K562 (cell line): ENCODE measurements at regions of chr7 and their contacts with region 1.

Region 1: DNA sequence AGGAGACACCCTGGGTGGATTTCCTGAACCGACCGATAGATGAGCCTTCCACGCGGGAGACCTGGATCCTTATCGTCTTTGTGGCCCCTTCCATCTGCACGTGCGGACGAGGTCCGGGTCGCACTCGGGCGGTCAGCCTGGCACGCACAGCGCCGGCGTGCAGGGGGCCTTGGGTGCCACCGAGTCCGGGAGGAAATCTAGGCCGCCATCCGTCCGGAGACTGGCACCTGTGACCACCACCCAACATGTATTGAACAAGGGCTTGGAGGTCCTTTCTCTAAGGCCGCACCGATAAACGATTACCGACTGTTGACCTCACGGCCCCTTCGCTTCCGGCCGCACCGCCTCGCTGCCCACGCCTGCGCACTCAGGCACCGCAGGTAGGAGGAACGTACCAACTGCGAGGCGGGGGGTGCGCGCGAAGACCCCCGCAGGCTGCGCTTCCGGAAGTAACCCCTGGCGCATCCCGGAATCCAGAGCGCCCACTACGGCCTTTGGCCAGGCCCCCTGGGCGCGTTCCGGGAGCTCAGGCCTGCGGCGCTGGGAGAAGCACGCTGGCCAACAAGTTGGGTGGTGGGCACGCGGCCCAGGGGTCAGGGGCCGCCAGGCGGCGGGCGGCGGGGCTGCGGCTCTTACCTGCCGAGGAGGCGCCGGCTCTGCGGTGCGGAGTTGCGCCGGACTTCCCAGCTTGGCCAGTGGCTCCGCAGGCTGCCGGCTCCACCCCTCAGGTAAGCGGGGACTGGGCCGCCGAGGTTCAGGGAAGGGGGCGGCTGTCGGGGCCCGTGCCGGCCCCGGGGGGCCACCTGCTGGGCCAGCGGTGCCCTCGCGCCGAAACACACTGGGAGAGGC is at the starts of genes ACTR3C and LRRC61:
- DNase-seq: peak; percentile 89 to 97 (median 94)
- ATAC-seq: peak; percentile 83
- H3K4me3 ChIP-seq: peak within 1 kb of the TSS; percentile 68
- H3K27ac ChIP-seq: peak within 1 kb of the TSS; percentile 99
- H3K4me1 ChIP-seq: peaks cover 48 to 54% of the 10 kb centered on the region in 2 experiments
- H3K27me3 ChIP-seq: no peaks in the 10 kb centered on the region
- CTCF ChIP-seq: peak; percentile 63 to 78 (median 63); a peak in 4 of 6 replicates
- EP300 ChIP-seq: peak; percentile 30; the same call in 1 of the 2 replicates
- POLR2A ChIP-seq: peak; percentile 91
- RAD21 ChIP-seq: peak; percentile 87 to 90
- polyA plus RNA-seq, gene ACTR3C: 9.0 to 13.3 TPM
- polyA plus RNA-seq, gene LRRC61: 1.3 to 1.7 TPM

Region 2: DNA sequence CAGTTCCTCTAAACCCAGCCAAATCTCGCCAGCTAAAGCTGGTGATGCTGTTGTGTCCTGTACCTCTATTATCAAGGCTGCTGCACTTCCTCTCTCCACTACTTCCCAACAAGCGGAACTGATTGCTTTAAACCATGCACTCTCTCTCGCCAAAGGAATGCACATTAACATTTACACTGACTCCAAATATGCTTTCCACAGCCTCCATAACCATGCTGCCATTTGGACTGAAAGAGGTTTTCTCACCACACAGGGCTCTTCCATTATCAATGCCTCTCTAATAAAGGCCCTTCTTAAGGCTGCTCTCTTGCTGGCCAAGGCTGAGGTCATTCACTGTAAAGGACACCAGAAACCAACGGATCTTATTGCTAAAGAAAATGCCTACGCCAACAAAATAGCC is 11.3 kb before region 1 on chr7:
- CTCF ChIA-PET with region 1: no interaction called
- POLR2A ChIA-PET with region 1: interaction called, 35 read pairs
- in situ Hi-C with region 1: no loop called
- intact Hi-C with region 1: loop called (anchors 1 kb)
- DNase-seq: peak in 1 of 4 experiments; percentile 7
- ATAC-seq: no peak
- H3K4me3 ChIP-seq: no peak overlapping the region
- H3K27ac ChIP-seq: peak overlapping the region; percentile 88; the same call in 1 of the 3 replicates
- H3K4me1 ChIP-seq: peaks cover 28 to 58% of the 10 kb centered on the region in 2 experiments
- H3K27me3 ChIP-seq: no peaks in the 10 kb centered on the region
- CTCF ChIP-seq: no peak
- EP300 ChIP-seq: no peak
- POLR2A ChIP-seq: no peak
- RAD21 ChIP-seq: no peak

Region 3: DNA sequence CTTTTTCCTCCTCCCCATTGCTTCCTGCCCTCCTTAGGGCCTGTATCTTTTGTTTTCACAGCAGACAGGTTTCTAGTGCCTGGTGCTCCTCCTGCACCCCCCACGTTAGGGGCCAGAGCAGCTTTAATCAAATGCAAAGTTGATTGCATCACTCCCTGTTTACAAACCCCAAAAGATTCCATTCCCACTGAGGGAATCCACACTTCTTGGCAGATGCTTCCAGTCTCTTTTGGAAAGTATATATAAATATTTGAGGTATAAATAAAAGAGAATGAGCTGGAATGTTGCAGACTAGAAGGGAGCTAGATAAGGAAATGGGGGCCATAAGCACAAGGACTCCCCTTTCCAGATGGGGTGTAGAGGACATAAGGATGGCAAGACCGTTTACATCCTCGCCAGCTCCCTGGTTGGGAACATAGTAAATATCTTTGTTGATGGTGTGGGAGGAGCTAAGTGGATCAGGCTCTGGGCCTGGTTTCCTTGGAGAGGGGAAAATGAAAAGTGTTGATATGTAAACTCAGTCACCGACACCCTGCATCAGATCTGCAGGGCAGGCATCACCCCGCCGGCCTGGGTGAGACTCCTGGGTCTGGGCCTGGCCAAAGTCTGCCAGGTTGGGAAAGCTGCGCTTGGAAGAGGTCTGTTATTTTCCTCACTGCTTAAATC is 12.2 kb after region 1 on chr7:
- CTCF ChIA-PET with region 1: no interaction called
- POLR2A ChIA-PET with region 1: interaction called, 13 read pairs
- in situ Hi-C with region 1: no loop called
- intact Hi-C with region 1: no loop called
- DNase-seq: peak in 2 of 4 experiments; percentile 13 to 14
- ATAC-seq: no peak
- H3K4me3 ChIP-seq: no peak overlapping the region
- H3K27ac ChIP-seq: no peak overlapping the region
- H3K4me1 ChIP-seq: peaks cover 0 to 26% of the 10 kb centered on the region in 2 experiments; a peak in 3 of 5 replicates
- H3K27me3 ChIP-seq: no peaks in the 10 kb centered on the region
- CTCF ChIP-seq: no peak
- EP300 ChIP-seq: no peak
- POLR2A ChIP-seq: no peak
- RAD21 ChIP-seq: no peak

Region 4: GRCh38 chr7:150356265-150356897 is 33.3 kb after region 1 on chr7:
- CTCF ChIA-PET with region 1: no interaction called
- POLR2A ChIA-PET with region 1: interaction called, 5 read pairs
- in situ Hi-C with region 1: no loop called
- intact Hi-C with region 1: loop called (anchors 1 kb)
- DNase-seq: peak; percentile 69 to 76 (median 70)
- ATAC-seq: peak; percentile 52
- H3K4me3 ChIP-seq: no peak overlapping the region
- H3K27ac ChIP-seq: no peak overlapping the region
- H3K4me1 ChIP-seq: peaks cover 30 to 34% of the 10 kb centered on the region in 2 experiments; a peak in 4 of 5 replicates
- H3K27me3 ChIP-seq: no peaks in the 10 kb centered on the region; a peak in 1 of 5 replicates
- CTCF ChIP-seq: peak; percentile 79 to 89 (median 89)
- EP300 ChIP-seq: no peak
- POLR2A ChIP-seq: no peak
- RAD21 ChIP-seq: peak; percentile 55 to 66

Region 5: GRCh38 chr7:150368096-150368883 is 45.2 kb after region 1 on chr7 and contains the start of gene REPIN1:
- CTCF ChIA-PET with region 1: no interaction called
- POLR2A ChIA-PET with region 1: interaction called, 13 read pairs
- in situ Hi-C with region 1: no loop called
- intact Hi-C with region 1: loop called (anchors 2 kb)
- DNase-seq: peak; percentile 97 to 99 (median 98)
- ATAC-seq: peak; percentile 76
- H3K4me3 ChIP-seq: peak within 1 kb of the TSS; percentile 79
- H3K27ac ChIP-seq: peak within 1 kb of the TSS; percentile 97
- H3K4me1 ChIP-seq: peaks cover 45 to 51% of the 10 kb centered on the region in 2 experiments
- H3K27me3 ChIP-seq: no peaks in the 10 kb centered on the region
- CTCF ChIP-seq: 0 out of 6 replicates have a peak, but pooled peaks of 1 of the 3 experiments have one; percentile 1
- EP300 ChIP-seq: peak; percentile 56
- POLR2A ChIP-seq: peak; percentile 74
- RAD21 ChIP-seq: peak in 1 of 2 experiments; percentile 5; a peak in 1 of 4 replicates
- polyA plus RNA-seq, gene REPIN1: 8.1 to 11.0 TPM

Region 6: GRCh38 chr7:150955519-150956394 is 632.7 kb after region 1 on chr7:
- CTCF ChIA-PET with region 1: no interaction called
- POLR2A ChIA-PET with region 1: no interaction called
- in situ Hi-C with region 1: no loop called
- intact Hi-C with region 1: loop called (anchors 5 kb)
- DNase-seq: peak; percentile 99 to 100 (median 99)
- ATAC-seq: peak; percentile 80
- H3K4me3 ChIP-seq: peak overlapping the region; percentile 91
- H3K27ac ChIP-seq: peak overlapping the region; percentile 86
- H3K4me1 ChIP-seq: peaks cover 60 to 94% of the 10 kb centered on the region in 2 experiments
- H3K27me3 ChIP-seq: no peaks in the 10 kb centered on the region
- CTCF ChIP-seq: peak in 1 of 3 experiments; percentile 0; a peak in 1 of 6 replicates
- EP300 ChIP-seq: peak; percentile 87
- POLR2A ChIP-seq: peak; percentile 86
- RAD21 ChIP-seq: peak in 1 of 2 experiments; percentile 11; a peak in 3 of 4 replicates